ENCODE measurements at regions of chr10 and their contacts with region 1.

Region 1: DNA sequence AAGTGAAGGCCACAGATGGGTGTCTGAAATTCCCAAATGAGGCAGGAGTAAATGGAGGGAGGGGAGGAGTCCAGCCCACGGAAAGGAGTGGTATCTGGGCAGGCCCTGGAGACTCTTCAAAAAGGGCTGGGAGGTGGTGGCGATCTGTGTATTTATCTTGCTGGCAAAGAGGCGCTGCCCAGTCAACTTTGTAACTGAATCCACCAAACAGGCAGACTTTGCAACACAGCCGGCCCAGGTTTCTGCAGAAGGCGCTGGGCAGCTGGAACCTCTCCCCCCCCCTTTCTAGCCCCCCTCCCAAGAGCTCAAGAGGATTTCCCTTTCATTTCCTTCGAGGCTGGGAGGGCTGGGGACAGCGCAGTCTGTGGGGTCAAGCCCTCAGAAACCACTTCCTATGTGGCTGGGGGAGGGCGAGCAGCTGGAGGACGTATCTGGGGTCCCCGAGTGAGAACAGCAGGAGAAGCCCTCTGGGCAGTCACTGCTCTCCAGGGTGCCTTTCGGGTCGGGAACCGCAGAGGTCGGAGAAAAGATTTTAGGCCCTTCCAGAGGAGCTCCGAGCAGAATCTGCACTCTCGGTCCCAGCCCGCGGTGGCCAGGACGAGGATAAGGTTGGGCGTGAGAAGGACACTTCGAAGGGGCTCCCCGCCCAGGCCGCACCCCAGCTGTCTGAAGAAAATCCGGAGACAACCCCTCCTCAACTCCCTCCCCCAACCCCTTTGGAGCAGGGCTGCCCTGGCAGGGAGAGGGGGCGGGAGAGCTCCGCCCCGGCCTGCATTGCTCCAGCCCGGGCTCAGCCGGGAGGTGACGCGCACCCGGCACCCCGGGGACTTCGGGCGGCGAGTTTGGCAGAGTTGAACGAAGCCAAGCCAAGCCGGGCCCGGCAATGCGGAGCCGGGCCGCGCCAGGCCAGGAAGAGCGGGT is 965 bp downstream of the ZCCHC24 start:
- DNase-seq: peak; percentile 82
- ATAC-seq: peak; percentile 58 to 68

Region 2: GRCh38 chr10:79400146-79401004 is 44.1 kb before region 1 on chr10:
- intact Hi-C with region 1: loop called in 1 of 2 experiments (anchors 5 kb)
- DNase-seq: no peak
- ATAC-seq: no peak